SK-N-SH (cell line): ENCODE measurements at regions of chr11 and their contacts with region 1.

Region 1: DNA sequence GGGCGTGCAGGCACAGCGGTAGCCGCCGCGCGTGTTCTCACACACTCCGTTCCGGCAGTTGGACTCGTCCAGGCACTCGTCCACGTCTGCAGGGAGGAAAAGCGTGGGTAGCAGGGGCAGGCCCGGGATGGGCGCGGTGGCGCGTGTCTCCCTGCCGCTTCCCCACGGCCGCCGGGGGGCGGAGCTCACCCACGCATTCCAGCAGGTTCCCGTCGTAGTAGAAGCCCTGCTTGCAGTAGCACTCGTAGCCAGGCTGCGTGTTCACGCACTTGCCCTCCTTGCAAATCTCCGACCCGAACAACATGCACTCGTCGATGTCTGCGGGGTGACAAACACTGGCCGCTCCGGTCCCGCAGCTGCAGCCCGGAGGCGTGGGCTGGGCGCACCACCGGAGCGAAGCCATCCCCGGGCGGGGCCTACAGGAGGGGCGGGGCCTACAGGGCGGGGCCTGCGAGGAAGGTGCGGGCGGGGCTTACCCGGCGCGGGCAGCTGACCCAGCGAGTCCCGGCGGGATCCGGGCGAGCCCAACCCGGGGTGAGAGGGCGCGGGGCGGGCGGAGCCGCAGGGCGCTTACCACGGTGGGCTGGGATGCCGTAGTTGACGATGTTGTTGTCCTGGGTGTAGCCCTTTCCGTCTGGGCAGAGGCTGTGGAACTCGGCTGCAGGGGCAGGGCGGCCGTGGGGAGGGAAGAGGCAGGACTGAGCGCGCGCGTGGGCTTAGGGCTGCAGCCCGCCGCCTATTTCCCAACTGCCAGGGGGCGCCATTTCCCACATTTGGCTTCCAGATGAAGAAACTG is 15.6 kb downstream of the SCYL1 start:
- DNase-seq: peak; percentile 99
- H3K4me3 ChIP-seq: peak overlapping the region; percentile 43 to 49
- H3K27ac ChIP-seq: peak overlapping the region; percentile 29 to 81
- H3K4me1 ChIP-seq: peaks cover 4 to 12% of the 10 kb centered on the region in 2 experiments; a peak in 1 of 4 replicates
- H3K27me3 ChIP-seq: no peaks in the 10 kb centered on the region
- CTCF ChIP-seq: peak; percentile 87
- EP300 ChIP-seq: no peak
- RAD21 ChIP-seq: peak; percentile 80

Region 2: GRCh38 chr11:65505466-65506292 is 34.8 kb before region 1 on chr11:
- CTCF ChIA-PET with region 1: no interaction called
- POLR2A ChIA-PET with region 1: no interaction called
- DNase-seq: no peak
- H3K4me3 ChIP-seq: peak overlapping the region; percentile 84 to 87
- H3K27ac ChIP-seq: peak overlapping the region; percentile 71 to 99
- H3K4me1 ChIP-seq: peaks cover 0 to 19% of the 10 kb centered on the region in 2 experiments; a peak in 2 of 4 replicates
- H3K27me3 ChIP-seq: no peaks in the 10 kb centered on the region
- CTCF ChIP-seq: no peak
- EP300 ChIP-seq: no peak
- RAD21 ChIP-seq: no peak

Region 3: GRCh38 chr11:65551572-65552398 is 11.3 kb after region 1 on chr11:
- CTCF ChIA-PET with region 1: interaction called, 88 read pairs
- POLR2A ChIA-PET with region 1: interaction called, 3 read pairs
- DNase-seq: peak; percentile 85
- H3K4me3 ChIP-seq: no peak overlapping the region
- H3K27ac ChIP-seq: no peak overlapping the region
- H3K4me1 ChIP-seq: peaks cover 16 to 27% of the 10 kb centered on the region in 2 experiments; a peak in 3 of 4 replicates
- H3K27me3 ChIP-seq: no peaks in the 10 kb centered on the region
- CTCF ChIP-seq: peak; percentile 62
- EP300 ChIP-seq: no peak
- RAD21 ChIP-seq: peak; percentile 43

Region 4: GRCh38 chr11:65569973-65570918 is 29.8 kb after region 1 on chr11 and contains the start of gene ZNRD2:
- CTCF ChIA-PET with region 1: interaction called, 295 read pairs
- POLR2A ChIA-PET with region 1: interaction called, 7 read pairs
- DNase-seq: peak; percentile 95
- H3K4me3 ChIP-seq: peak within 1 kb of the TSS; percentile 76 to 99
- H3K27ac ChIP-seq: peak within 1 kb of the TSS; percentile 81 to 97
- H3K4me1 ChIP-seq: peaks cover 41 to 47% of the 10 kb centered on the region in 2 experiments; a peak in 3 of 4 replicates
- H3K27me3 ChIP-seq: no peaks in the 10 kb centered on the region
- CTCF ChIP-seq: peak; percentile 65
- EP300 ChIP-seq: no peak; a peak in 1 of 4 replicates
- RAD21 ChIP-seq: peak; percentile 62
- polyA plus RNA-seq, gene ZNRD2: 62.5 and 78.1 TPM in 2 replicates

Region 5: GRCh38 chr11:65606876-65607613 is 66.5 kb after region 1 on chr11:
- CTCF ChIA-PET with region 1: interaction called, 13 read pairs
- POLR2A ChIA-PET with region 1: interaction called, 3 read pairs
- DNase-seq: peak; percentile 100
- H3K4me3 ChIP-seq: peak overlapping the region in 1 of 2 experiments; percentile 33; a peak in 2 of 4 replicates
- H3K27ac ChIP-seq: peak overlapping the region; percentile 11 to 56; a peak in 2 of 4 replicates
- H3K4me1 ChIP-seq: peaks cover 14 to 21% of the 10 kb centered on the region in 2 experiments; a peak in 2 of 4 replicates
- H3K27me3 ChIP-seq: no peaks in the 10 kb centered on the region
- CTCF ChIP-seq: no peak
- EP300 ChIP-seq: no peak
- RAD21 ChIP-seq: no peak

Region 6: DNA sequence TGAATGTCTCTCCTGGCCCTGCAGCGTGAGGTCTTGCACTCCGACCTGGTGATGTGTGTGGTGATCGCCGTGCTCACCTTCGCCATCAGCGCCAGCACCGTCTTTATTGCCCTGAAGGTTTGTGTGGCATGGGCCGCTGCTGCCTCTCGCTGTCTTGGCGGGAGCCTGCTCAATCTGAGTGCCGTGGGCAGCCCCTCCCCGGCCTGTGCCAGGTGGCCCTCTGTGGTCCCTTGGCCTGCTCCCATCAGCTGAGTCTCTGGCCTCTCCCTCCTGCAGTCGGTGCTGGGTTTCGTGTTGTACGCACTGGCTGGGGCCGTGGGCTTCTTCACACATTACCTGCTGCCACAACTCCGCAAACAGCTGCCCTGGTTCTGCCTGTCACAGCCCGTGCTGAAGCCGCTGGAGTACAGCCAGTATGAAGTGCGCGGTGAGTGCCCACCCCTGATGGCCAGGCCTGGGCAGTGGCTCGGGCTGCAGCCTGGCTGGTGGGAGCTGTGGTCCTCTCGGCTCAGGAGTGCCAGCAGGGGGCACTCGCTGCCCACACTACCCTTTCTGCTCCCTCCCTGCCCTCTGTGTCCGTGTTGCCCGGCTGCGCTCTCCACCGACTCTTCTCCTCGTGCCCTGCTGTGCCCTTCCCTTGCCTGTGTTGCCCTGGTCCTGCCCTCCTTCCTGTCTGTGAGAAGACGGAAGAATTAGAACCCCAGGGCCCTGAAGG is 85.3 kb after region 1 on chr11:
- CTCF ChIA-PET with region 1: interaction called, 12 read pairs
- POLR2A ChIA-PET with region 1: no interaction called
- DNase-seq: peak; percentile 89
- H3K4me3 ChIP-seq: no peak overlapping the region
- H3K27ac ChIP-seq: no peak overlapping the region
- H3K4me1 ChIP-seq: no peaks in the 10 kb centered on the region
- H3K27me3 ChIP-seq: no peaks in the 10 kb centered on the region
- CTCF ChIP-seq: peak; percentile 54
- EP300 ChIP-seq: no peak
- RAD21 ChIP-seq: peak; percentile 69